ENCODE measurements at regions of chr21 and their contacts with region 1.

Region 1: DNA sequence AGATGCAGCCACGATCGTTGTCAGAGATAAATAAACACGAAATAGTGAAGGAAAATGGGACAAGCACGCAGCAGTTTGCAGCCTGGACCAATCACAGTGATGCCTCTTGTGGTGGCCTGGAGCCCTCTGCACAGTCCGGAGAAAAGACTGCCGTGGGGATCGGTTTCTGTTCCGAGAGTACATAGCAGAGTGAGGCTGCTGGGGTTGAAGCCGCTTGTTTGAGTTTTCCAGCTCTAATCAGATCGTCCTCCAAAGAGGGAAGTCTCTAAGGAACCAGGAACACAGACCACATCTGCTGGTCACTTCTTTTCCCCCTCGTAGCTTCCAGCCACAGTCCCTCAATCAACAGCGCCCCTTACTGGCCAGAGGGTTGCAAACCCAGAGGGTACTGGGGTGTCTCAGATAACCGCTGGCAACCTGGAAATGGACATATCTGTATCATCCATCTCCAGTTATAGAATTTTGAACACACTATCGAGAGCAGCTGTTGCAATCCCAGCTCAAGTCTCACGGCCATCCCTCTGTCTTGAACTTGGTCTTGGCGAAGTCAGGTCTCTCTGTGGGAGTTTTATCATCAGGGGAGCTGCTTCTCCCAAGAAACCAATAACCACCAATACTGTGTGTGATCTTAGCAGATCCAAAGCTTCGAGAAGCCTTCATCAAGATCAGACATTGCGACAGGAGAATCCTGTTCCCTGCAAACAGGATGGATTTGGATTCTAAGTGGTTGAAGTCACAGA is 57.4 kb downstream of the OLIG1 start:
- DNase-seq: peak; percentile 65
- H3K4me3 ChIP-seq: peak overlapping the region; percentile 44
- H3K27ac ChIP-seq: no peak overlapping the region
- H3K4me1 ChIP-seq: no peaks in the 10 kb centered on the region
- CTCF ChIP-seq: peak; percentile 94

Region 2: DNA sequence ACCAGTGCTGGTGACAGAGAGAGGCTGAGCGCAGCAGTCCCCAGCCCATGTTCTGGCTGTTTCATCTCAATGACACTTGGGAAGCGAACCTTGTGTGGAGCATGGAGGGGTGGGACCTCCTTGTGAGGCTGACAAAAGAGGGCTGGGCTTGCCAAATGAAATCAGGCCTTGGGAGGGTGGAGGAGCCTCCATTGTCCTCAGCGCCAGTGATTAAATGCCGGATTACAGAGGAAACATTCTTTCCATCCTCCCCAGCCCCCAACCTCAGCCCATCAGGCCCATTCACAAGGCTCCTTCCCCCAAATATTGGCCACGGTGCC is 292.4 kb before region 1 on chr21:
- CTCF ChIA-PET with region 1: no interaction called
- POLR2A ChIA-PET with region 1: no interaction called
- intact Hi-C with region 1: loop called (anchors 10 kb)
- DNase-seq: no peak
- H3K4me3 ChIP-seq: no peak overlapping the region
- H3K27ac ChIP-seq: no peak overlapping the region
- H3K4me1 ChIP-seq: no peaks in the 10 kb centered on the region
- CTCF ChIP-seq: no peak

Region 3: DNA sequence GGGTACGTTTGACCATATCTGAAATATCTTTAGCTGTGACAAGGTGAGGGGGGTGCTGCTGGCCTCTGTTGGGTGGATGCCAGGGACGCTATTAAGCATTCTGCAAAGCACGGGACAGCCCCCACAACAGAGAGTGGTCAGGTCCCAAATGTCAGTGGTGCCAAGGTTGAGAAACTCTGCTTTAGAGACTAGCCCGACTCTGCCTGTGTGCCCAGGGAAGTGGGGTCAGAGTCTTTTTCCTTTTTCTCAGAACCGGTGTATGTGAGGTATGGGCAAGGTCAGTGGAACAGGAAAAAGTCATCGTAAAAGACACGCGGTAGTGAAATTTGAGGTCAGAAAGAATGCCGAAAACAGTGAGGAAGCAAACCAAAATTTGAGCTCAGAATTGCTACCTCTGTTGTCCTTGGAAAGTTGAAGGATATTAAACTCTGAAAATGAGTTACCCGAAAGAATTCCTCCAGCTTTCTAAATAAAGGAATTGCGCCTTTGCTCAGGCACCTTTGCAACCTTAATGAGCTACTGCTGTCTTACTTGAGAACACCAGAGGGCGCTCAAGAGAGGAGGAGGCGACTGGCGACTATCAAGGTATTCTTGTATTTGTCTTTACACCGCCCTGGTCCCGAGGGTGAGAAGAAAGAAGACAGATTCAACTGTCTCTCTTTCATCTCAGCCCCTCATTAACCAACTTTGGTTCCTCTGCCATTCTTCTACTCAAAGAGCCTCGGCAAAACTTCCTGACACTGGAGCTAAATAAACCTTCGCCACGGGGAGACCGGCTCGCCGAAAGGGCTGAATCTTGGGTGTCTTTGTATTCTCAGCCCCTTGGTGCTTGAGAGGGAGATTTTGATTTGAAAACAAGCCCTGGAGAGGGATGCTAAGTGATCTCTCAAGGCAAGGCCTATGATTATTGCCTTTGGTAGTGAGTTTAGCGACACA is 187.0 kb before region 1 on chr21:
- CTCF ChIA-PET with region 1: no interaction called
- POLR2A ChIA-PET with region 1: no interaction called
- intact Hi-C with region 1: loop called (anchors 5 kb)
- DNase-seq: peak; percentile 60
- H3K4me3 ChIP-seq: no peak overlapping the region
- H3K27ac ChIP-seq: no peak overlapping the region
- H3K4me1 ChIP-seq: no peaks in the 10 kb centered on the region
- CTCF ChIP-seq: peak; percentile 89

Region 4: DNA sequence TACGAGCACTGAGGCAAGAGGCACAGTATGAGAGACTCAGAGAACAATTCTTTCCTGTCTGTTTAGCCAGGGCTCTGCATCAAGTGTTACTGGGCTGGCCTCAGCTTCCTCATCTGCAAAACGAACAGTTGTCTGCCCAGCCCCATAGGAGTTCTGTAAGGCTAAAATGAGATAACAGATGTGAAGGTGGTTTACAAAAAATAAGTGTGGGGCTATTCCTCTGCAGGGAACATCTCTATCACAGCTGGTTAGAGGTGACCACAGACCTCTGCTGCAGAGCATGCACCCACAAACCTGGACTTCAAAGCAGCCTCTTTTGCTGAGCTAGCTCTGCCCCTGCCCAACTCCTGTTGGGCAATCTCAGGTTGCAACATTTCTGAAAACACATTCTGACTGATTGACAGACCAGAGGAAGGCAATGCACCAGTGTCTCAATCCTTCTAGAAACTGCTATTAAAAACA is 67.9 kb before region 1 on chr21:
- CTCF ChIA-PET with region 1: no interaction called
- POLR2A ChIA-PET with region 1: no interaction called
- intact Hi-C with region 1: no loop called
- DNase-seq: no peak
- H3K4me3 ChIP-seq: no peak overlapping the region
- H3K27ac ChIP-seq: no peak overlapping the region
- H3K4me1 ChIP-seq: no peaks in the 10 kb centered on the region
- CTCF ChIP-seq: no peak

Region 5: GRCh38 chr21:33229784-33230544 is 102.6 kb after region 1 on chr21 and contains the start of gene IFNAR2:
- CTCF ChIA-PET with region 1: no interaction called
- POLR2A ChIA-PET with region 1: no interaction called
- intact Hi-C with region 1: no loop called
- DNase-seq: peak; percentile 75
- H3K4me3 ChIP-seq: peak within 1 kb of the TSS; percentile 86
- H3K27ac ChIP-seq: peak within 1 kb of the TSS; percentile 76
- H3K4me1 ChIP-seq: peaks cover 46% of the 10 kb centered on the region
- CTCF ChIP-seq: no peak
- total RNA-seq, gene IFNAR2: 22.1 and 24.8 TPM in 2 replicates

Region 6: GRCh38 chr21:33268737-33269441 is 141.6 kb after region 1 on chr21:
- CTCF ChIA-PET with region 1: no interaction called
- POLR2A ChIA-PET with region 1: no interaction called
- intact Hi-C with region 1: no loop called
- DNase-seq: peak; percentile 81
- H3K4me3 ChIP-seq: peak overlapping the region; percentile 78
- H3K27ac ChIP-seq: peak overlapping the region; percentile 70
- H3K4me1 ChIP-seq: peaks cover 52% of the 10 kb centered on the region
- CTCF ChIP-seq: peak; percentile 57

Region 7: GRCh38 chr21:33608559-33608958 is 481.2 kb after region 1 on chr21:
- CTCF ChIA-PET with region 1: no interaction called
- POLR2A ChIA-PET with region 1: no interaction called
- intact Hi-C with region 1: no loop called
- DNase-seq: no peak
- H3K4me3 ChIP-seq: no peak overlapping the region
- H3K27ac ChIP-seq: no peak overlapping the region
- H3K4me1 ChIP-seq: no peaks in the 10 kb centered on the region
- CTCF ChIP-seq: no peak